Gastrocnemius medialis (tissue), 4 donors: ENCODE measurements at regions of chr14 and their contacts with region 1.

Region 1: GRCh38 chr14:101707068-101707842 is 54.3 kb upstream of the PPP2R5C start:
- DNase-seq: peak; percentile 32 to 56
- ATAC-seq: peak; percentile 75 to 90
- H3K4me3 ChIP-seq: peak overlapping the region in 1 of 4 donors; percentile 10
- H3K27ac ChIP-seq: peak overlapping the region; percentile 58 to 71 (median 66)
- H3K4me1 ChIP-seq: peaks cover 0 to 7% of the 10 kb centered on the region in 2 donors
- H3K27me3 ChIP-seq: peaks cover 0 to 4% (median 0%) of the 10 kb centered on the region in 3 donors
- CTCF ChIP-seq: peak; percentile 80 to 91 (median 89)
- POLR2A ChIP-seq: no peak

Region 2: GRCh38 chr14:101601606-101602465 is 105.4 kb before region 1 on chr14:
- in situ Hi-C with region 1: no loop called
- intact Hi-C with region 1: no loop called
- DNase-seq: peak in 1 of 2 donors; percentile 1
- ATAC-seq: no peak
- H3K4me3 ChIP-seq: no peak overlapping the region
- H3K27ac ChIP-seq: no peak overlapping the region
- H3K4me1 ChIP-seq: no peaks in the 10 kb centered on the region
- H3K27me3 ChIP-seq: peaks cover 0 to 3% (median 0%) of the 10 kb centered on the region in 3 donors
- CTCF ChIP-seq: no peak
- POLR2A ChIP-seq: no peak

Region 3: DNA sequence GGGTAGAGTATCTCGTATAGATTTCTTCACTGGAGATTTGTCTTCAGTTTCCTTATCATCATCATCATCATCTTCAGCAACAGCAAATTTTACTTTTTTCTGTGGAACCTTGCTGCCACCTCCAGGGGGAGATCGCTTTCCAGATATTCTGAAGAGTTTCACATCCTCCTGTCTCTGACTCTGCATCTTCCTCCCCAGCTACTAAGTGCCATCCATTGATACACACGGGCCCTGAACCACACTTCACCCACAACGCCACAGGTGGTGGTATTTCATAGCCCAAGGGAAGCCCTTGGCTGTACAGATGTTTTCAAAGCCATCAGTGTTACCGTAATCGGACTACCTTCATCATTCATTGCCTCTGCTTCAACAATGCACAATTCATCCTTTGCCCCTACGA is 136.4 kb after region 1 on chr14:
- in situ Hi-C with region 1: loop called in 1 of 4 experiments (anchors 10 kb)
- intact Hi-C with region 1: loop called (anchors 10 kb)
- DNase-seq: no peak
- ATAC-seq: no peak
- H3K4me3 ChIP-seq: no peak overlapping the region
- H3K27ac ChIP-seq: no peak overlapping the region
- H3K4me1 ChIP-seq: peaks cover 0 to 13% of the 10 kb centered on the region in 2 donors
- H3K27me3 ChIP-seq: no peaks in the 10 kb centered on the region
- CTCF ChIP-seq: peak in 2 of 5 experiments; percentile 32 to 35
- POLR2A ChIP-seq: no peak

Region 4: DNA sequence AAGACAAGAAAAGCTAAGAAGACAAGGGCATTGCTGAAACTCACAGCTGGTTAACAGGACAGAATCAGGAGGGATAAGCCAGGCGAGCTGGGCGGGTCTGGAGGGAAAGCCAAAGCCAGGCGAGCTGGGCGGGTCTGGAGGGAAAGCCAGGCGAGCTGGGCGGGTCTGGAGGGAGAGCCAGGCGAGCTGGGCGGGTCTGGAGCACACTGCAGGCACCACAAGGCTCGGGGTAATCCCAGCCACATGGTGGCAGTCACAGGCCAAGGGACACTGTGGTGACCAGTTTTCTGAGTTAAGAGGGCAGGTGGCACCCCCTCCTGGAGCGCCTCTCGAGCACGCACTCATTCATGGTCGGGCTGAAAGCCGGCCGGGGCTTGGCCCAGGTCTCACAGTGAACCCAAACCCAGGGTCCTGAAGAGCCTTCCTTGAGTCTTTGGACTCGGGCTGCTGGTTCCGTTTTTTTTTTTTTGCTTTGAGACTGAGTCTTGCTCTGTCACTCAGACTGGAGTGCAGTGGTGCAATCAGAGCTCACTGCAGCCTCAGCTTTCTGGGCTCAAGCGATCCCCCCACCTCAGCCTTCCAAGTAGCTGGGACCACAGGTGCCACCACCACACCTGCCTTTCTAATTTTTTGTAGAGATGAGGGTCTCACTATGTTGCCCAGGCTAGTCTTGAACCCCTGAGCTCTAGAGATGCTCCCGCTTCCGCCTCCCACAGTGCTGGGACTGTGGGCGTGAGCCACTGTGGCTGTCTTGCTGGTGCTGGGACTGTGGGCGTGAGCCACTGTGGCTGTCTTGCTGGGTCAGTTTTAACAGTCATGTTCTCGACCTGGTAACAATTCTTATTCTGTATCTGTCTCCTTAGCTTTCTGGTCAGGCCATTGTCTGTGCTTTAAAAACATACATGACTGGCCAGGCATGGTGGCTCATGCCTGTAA is 339.4 kb after region 1 on chr14:
- in situ Hi-C with region 1: no loop called
- intact Hi-C with region 1: loop called (anchors 1 kb)
- DNase-seq: peak; percentile 79 to 93
- ATAC-seq: peak; percentile 54 to 87
- H3K4me3 ChIP-seq: no peak overlapping the region
- H3K27ac ChIP-seq: peak overlapping the region; percentile 58 to 77 (median 70)
- H3K4me1 ChIP-seq: peaks cover 36% of the 10 kb centered on the region in 2 donors
- H3K27me3 ChIP-seq: no peaks in the 10 kb centered on the region
- CTCF ChIP-seq: peak; percentile 43 to 69 (median 56)
- POLR2A ChIP-seq: no peak

Region 5: DNA sequence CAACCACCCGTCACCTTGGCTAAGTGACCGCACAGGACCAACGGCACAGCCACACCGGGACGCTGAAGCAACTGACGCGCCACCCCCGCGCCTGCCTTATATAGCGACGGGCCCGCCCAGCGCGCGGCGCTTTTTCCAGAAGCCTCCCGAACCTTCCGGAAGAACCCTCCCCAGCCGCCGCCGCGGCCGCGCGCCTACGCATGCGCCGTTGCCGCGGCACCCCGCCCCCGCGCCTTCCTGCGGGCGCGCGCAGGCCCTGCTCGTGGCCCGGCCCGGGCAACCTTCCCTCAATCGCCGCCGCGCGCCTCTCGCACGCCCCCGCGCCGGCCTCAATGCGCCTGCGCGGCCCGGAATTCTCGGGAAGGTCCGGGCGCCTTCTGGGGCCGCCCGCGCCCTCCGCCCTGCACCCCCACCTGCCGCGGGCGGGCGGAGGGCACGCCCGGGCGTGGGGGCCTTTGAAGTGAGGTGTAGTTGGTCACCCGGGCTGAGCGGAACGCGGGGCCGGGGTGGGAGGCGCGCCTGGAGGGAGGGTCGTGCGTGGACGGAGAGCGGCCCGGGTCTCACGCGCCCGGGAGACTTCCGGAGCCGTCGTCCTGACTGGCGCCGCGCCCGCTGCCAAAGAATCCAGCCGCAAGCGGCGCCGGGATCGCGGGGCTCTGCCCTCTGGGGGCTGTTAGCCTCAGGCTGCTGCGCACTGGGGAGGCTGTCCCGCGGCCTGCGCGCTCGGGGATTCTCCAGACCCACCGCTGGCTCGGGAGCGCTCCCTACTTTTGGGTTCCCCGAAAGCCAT is 379.9 kb after region 1 on chr14 and contains the start of gene HSP90AA1:
- in situ Hi-C with region 1: loop called in 1 of 4 experiments (anchors 25 kb)
- intact Hi-C with region 1: no loop called
- DNase-seq: peak; percentile 84 to 93
- ATAC-seq: peak; percentile 88 to 90
- H3K4me3 ChIP-seq: peak within 1 kb of the TSS; percentile 72 to 93 (median 90)
- H3K27ac ChIP-seq: peak within 1 kb of the TSS; percentile 96 to 99 (median 99)
- H3K4me1 ChIP-seq: peaks cover 26 to 43% of the 10 kb centered on the region in 2 donors
- H3K27me3 ChIP-seq: no peaks in the 10 kb centered on the region
- CTCF ChIP-seq: peak in 2 of 5 experiments; percentile 25 to 32
- POLR2A ChIP-seq: peak; percentile 97 to 99
- total RNA-seq, gene HSP90AA1: 227 to 609 (median 488) TPM

Region 6: DNA sequence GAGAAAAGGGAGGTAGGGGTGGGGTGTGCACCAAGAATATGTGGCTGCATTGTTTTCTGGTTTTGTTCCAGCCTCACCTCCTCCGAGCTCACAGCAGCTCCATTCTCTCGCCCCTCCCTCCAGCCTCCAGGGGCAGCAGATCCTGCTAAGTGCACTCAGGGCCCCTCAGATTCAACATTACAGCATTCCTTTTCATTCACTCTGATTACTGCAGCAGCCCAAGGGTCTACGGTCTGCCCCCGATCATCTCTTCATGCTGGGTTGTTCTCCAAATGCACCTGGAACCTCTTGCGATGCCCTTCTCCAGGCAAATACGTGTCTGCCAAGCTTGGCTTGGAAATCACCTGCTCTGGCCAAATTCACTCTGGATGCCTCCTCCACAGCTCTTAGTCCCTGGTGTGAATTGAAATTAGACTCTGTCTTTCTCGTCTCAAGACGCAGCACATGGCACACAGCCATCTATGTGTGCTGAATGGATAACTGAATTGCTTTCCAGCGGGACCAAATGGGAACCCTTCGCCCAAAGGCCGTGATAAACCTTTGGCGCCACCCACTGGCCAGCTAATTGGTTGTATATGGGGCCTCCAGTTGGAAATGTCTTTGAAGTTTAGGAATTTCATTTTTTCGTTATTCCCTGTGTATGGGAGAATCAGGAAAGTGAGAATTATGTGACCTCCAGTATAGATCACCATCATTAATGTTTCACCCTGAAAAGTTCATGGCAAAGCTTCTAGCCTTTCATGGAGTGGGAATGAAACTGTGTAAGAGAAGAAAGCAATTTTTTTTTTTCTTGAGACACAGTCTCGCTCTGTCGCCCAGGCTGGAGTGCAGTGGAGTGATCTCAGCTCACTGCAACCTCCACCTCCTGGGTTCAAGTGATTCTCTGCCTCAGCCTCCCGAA is 389.2 kb after region 1 on chr14:
- in situ Hi-C with region 1: loop called in 1 of 4 experiments (anchors 25 kb)
- intact Hi-C with region 1: loop called (anchors 2 kb)
- DNase-seq: peak; percentile 72 to 75
- ATAC-seq: peak; percentile 89
- H3K4me3 ChIP-seq: no peak overlapping the region
- H3K27ac ChIP-seq: peak overlapping the region in 1 of 4 donors; percentile 16
- H3K4me1 ChIP-seq: peaks cover 7% of the 10 kb centered on the region in 2 donors
- H3K27me3 ChIP-seq: no peaks in the 10 kb centered on the region
- CTCF ChIP-seq: peak; percentile 73 to 87 (median 77)
- POLR2A ChIP-seq: no peak